ENCODE measurements at regions of chr9 and their contacts with region 1.

Region 1: DNA sequence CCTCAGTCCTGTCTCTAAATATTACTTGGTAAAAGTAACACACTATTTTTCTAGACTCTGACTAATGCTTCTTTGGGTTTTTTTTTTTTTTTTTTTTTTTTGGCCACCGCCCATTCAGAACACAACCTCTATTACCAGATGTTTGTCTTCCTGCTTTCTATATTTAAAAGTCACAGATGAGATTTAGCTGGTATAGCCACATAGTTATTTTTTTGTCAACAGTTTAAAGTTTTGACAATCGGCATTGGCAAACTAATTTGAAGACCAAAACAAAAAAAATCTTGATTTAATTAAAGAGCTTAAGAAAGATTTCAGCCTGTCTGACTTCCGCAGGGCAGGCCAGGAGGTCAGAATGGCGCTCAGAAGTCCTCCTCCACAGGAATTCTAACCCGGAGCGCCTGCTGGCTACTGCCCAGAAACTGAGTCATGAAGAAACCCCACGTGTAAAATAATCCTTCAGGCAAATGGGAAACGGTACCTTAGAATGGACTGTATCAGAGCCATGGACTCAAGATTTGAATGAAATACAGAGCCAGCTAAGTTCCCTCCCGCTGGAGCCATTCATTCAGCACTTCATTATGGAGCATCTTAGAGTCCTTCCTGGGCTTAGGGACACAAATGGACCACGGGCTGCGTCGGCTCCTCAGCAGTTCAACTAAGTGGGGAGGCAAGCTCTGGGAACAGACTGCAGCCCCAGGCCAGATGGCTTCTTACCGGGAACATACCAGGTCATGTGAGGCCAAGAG is 55.6 kb downstream of the PTPDC1 start:
- DNase-seq: peak; percentile 89 to 93
- ATAC-seq: peak; percentile 83 to 88 (median 86)
- H3K4me3 ChIP-seq: peak overlapping the region; percentile 32
- H3K27ac ChIP-seq: peak overlapping the region; percentile 82
- H3K4me1 ChIP-seq: peaks cover 33% of the 10 kb centered on the region
- H3K27me3 ChIP-seq: no peaks in the 10 kb centered on the region
- CTCF ChIP-seq: no peak

Region 2: DNA sequence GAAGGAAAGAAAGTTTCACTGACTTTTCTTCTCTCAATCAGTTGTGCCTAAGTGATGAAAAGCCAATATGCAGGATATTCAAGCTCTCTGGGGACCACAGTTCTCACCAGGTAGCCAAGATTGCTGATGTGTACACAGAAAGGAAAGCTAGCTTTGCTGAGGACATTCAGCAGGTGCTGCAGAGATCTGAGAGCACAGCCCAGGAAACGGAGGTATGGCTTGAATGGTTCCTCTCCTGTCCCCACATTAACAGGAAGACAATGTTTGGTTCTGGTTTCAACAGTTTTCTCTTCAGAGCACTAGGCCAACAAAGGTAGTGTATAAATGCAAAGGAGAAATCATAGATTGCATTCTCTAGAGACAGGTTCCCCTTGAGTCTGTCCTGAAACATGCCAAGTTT is 14.1 kb after region 1 on chr9:
- intact Hi-C with region 1: loop called in 1 of 2 experiments (anchors 2 kb)
- DNase-seq: no peak
- ATAC-seq: no peak
- H3K4me3 ChIP-seq: no peak overlapping the region
- H3K27ac ChIP-seq: no peak overlapping the region
- H3K4me1 ChIP-seq: peaks cover 15% of the 10 kb centered on the region
- H3K27me3 ChIP-seq: no peaks in the 10 kb centered on the region
- CTCF ChIP-seq: no peak

Region 3: GRCh38 chr9:94165592-94166236 is 25.9 kb after region 1 on chr9:
- intact Hi-C with region 1: loop called in 1 of 2 experiments (anchors 2 kb)
- DNase-seq: peak; percentile 98 to 99
- ATAC-seq: peak; percentile 88 to 92 (median 90)
- H3K4me3 ChIP-seq: peak overlapping the region; percentile 96
- H3K27ac ChIP-seq: peak overlapping the region; percentile 100
- H3K4me1 ChIP-seq: peaks cover 28% of the 10 kb centered on the region
- H3K27me3 ChIP-seq: no peaks in the 10 kb centered on the region
- CTCF ChIP-seq: no peak

Region 4: GRCh38 chr9:94182532-94182931 is 42.7 kb after region 1 on chr9:
- intact Hi-C with region 1: loop called in 1 of 2 experiments (anchors 5 kb)
- DNase-seq: no peak
- ATAC-seq: peak; percentile 23 to 43 (median 33)
- H3K4me3 ChIP-seq: no peak overlapping the region
- H3K27ac ChIP-seq: no peak overlapping the region
- H3K4me1 ChIP-seq: peaks cover 37% of the 10 kb centered on the region
- H3K27me3 ChIP-seq: no peaks in the 10 kb centered on the region
- CTCF ChIP-seq: no peak

Region 5: DNA sequence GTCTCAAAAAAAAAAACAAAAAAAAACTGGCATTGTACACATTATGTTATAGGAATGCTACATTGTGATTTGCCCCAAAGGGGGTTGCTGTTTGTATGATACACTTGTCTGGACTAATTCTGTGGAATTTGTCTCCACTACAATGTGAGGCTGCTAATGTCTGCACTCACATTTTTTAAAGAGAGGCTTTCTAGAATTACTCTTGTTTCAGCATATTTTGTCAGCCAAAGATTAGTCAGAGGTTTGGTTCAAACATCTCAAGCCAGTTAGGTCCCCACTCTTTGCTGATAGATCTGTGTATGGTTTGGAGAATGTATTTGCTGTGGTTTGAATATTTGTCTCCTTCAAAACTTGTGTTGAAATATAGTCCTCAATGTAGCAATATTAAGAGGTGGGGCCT is 59.9 kb after region 1 on chr9:
- intact Hi-C with region 1: loop called in 1 of 2 experiments (anchors 10 kb)
- DNase-seq: no peak
- ATAC-seq: no peak
- H3K4me3 ChIP-seq: no peak overlapping the region
- H3K27ac ChIP-seq: no peak overlapping the region
- H3K4me1 ChIP-seq: peaks cover 20% of the 10 kb centered on the region
- H3K27me3 ChIP-seq: no peaks in the 10 kb centered on the region
- CTCF ChIP-seq: no peak